ENCODE measurements at regions of chr17 and their contacts with region 1.

Region 1: DNA sequence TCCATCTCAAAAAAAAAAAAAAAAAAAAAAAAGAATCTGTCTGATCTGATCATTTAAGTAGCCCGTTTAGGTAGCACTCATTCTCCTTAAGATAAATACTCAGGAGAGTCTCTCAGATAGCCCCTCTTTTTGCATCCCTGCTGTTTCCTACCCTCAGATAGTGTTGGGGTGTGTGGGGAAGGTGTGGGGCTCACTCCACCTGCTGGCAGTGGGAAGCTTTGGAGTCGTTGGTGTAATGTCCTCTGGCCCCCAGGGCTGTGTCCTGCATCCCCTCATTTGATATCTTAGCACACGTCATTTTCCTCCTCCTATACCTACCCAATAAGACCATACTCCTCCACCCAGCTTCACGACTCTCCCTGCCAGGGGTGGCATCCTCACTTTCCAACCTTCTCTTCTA is 20.5 kb upstream of the MYH10 start:
- DNase-seq: no peak
- H3K4me3 ChIP-seq: no peak overlapping the region
- H3K27ac ChIP-seq: no peak overlapping the region
- H3K4me1 ChIP-seq: no peaks in the 10 kb centered on the region
- H3K27me3 ChIP-seq: no peaks in the 10 kb centered on the region
- CTCF ChIP-seq: 0 out of 2 replicates have a peak, but pooled peaks have one; percentile 14

Region 2: GRCh38 chr17:8173056-8173870 is 477.8 kb before region 1 on chr17:
- CTCF ChIA-PET with region 1: no interaction called
- POLR2A ChIA-PET with region 1: no interaction called
- intact Hi-C with region 1: no loop called
- DNase-seq: peak; percentile 96
- H3K4me3 ChIP-seq: peak overlapping the region; percentile 44
- H3K27ac ChIP-seq: peak overlapping the region; percentile 98
- H3K4me1 ChIP-seq: peaks cover 18% of the 10 kb centered on the region
- H3K27me3 ChIP-seq: no peaks in the 10 kb centered on the region
- CTCF ChIP-seq: no peak

Region 3: GRCh38 chr17:8585911-8586310 is 65.1 kb before region 1 on chr17:
- CTCF ChIA-PET with region 1: no interaction called
- POLR2A ChIA-PET with region 1: interaction called, 22 read pairs
- intact Hi-C with region 1: no loop called
- DNase-seq: no peak
- H3K4me3 ChIP-seq: no peak overlapping the region
- H3K27ac ChIP-seq: no peak overlapping the region
- H3K4me1 ChIP-seq: peaks cover 5% of the 10 kb centered on the region
- H3K27me3 ChIP-seq: no peaks in the 10 kb centered on the region
- CTCF ChIP-seq: no peak

Region 4: GRCh38 chr17:8924595-8924994 is 273.6 kb after region 1 on chr17:
- CTCF ChIA-PET with region 1: no interaction called
- POLR2A ChIA-PET with region 1: no interaction called
- intact Hi-C with region 1: no loop called
- DNase-seq: no peak
- H3K4me3 ChIP-seq: no peak overlapping the region
- H3K27ac ChIP-seq: no peak overlapping the region
- H3K4me1 ChIP-seq: no peaks in the 10 kb centered on the region
- H3K27me3 ChIP-seq: peaks cover 7% of the 10 kb centered on the region
- CTCF ChIP-seq: no peak